ENCODE measurements at regions of chr20 and their contacts with region 1.

Region 1: DNA sequence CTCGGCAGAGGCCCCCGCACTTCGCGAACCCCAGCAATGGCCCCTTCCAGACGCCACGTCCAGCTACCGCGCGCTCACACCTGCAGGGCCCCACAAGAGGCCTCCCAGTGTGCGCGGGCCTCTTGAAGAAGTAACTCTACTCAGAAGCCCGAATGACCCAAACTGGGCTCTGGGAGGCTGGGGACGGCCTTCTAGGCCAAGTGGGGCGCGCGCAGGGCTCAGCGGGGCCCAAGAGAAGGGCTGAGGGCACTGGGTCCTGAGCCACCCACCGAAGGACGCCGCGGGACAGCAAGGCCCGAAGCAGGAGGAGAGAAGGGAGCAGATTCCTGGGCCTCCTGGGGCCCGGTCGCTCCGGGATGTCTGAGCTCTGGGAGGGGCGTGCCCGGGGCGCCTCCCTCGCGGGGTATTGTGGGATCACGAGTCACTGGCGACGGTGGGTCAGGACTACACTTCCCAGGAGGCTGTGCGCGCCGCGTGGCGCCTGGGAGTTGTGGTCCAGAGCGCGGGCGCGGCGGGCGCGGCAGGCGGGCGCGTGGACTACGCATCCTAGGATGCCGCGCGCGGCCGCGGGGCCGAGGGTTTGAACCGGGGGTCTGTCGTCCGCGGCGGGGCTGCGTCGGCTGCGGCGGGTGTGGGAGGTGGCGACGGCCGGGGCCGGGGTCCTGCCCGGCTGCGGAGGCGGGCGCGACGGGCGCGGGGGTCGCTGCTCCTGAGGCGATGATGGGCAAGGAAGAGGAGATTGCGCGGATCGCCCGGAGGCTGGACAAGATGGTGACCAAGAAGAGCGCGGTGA is at the start of gene TCEA2:
- DNase-seq: peak; percentile 97
- H3K4me3 Mint-ChIP-seq: peak within 1 kb of the TSS; percentile 85
- H3K27ac Mint-ChIP-seq: peak within 1 kb of the TSS; percentile 69
- H3K4me1 Mint-ChIP-seq: peaks cover 44% of the 10 kb centered on the region
- H3K27me3 Mint-ChIP-seq: no peaks in the 10 kb centered on the region
- total RNA-seq, gene TCEA2: 27.3 to 29.9 TPM

Region 2: GRCh38 chr20:63894358-63895201 is 168.2 kb before region 1 on chr20 and contains the start of gene DNAJC5:
- CTCF ChIA-PET with region 1: no interaction called
- POLR2A ChIA-PET with region 1: no interaction called
- intact Hi-C with region 1: loop called (anchors 10 kb)
- DNase-seq: peak; percentile 97
- H3K4me3 Mint-ChIP-seq: peak within 1 kb of the TSS; percentile 97
- H3K27ac Mint-ChIP-seq: peak within 1 kb of the TSS; percentile 97
- H3K4me1 Mint-ChIP-seq: peaks cover 37% of the 10 kb centered on the region
- H3K27me3 Mint-ChIP-seq: no peaks in the 10 kb centered on the region
- total RNA-seq, gene DNAJC5: 33.7 to 33.8 TPM

Region 3: GRCh38 chr20:63980806-63981728 is 81.7 kb before region 1 on chr20 and contains the start of gene PRPF6:
- CTCF ChIA-PET with region 1: interaction called, 28 read pairs
- POLR2A ChIA-PET with region 1: interaction called, 5 read pairs
- intact Hi-C with region 1: loop called (anchors 1 kb)
- DNase-seq: peak; percentile 97
- H3K4me3 Mint-ChIP-seq: peak within 1 kb of the TSS; percentile 84
- H3K27ac Mint-ChIP-seq: peak within 1 kb of the TSS; percentile 96
- H3K4me1 Mint-ChIP-seq: peaks cover 60% of the 10 kb centered on the region
- H3K27me3 Mint-ChIP-seq: no peaks in the 10 kb centered on the region
- total RNA-seq, gene PRPF6: 62.3 to 63.1 TPM

Region 4: DNA sequence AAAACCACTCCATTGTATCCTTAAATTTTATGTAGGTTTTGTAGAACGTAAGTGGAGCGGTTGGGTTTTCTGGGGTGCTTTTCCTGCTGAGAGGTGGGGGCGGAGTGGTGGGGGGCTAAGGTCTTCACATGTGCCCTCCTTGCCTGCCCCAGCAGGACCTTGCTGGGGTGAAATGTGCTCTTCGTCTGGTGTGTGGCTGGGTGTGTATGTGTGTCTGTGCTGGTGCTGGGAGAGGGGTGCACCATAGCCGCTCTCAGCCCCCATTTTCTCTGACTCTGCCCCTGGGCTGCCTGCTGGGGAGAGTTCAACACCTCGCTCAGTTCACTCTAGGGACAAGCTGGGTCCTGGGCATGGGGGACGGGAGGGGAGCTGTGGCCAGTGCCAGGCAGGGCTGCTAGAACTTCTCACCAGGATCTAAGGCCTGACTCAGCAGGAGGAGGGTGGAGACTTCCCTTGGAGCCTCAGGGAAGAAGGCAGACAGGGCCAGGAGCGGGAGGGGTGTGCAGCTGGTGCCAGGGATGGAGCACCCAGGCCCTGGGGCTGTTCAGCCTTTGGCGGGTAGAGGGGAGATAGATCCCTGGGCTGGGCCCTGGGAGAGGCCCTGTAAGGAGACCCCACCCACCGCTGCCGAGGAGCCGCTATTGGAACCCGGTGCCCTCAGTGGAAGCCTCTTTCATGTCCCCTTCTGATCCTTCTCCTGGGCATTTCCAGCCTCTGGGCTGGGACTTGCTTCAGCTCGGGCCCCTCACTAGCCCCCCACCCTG is 18.1 kb before region 1 on chr20:
- CTCF ChIA-PET with region 1: interaction called, 38 read pairs
- POLR2A ChIA-PET with region 1: interaction called, 5 read pairs
- intact Hi-C with region 1: loop called (anchors 1 kb)
- DNase-seq: no peak
- H3K4me3 Mint-ChIP-seq: no peak overlapping the region
- H3K27ac Mint-ChIP-seq: no peak overlapping the region
- H3K4me1 Mint-ChIP-seq: peaks cover 5% of the 10 kb centered on the region
- H3K27me3 Mint-ChIP-seq: peaks cover 20% of the 10 kb centered on the region

Region 5: DNA sequence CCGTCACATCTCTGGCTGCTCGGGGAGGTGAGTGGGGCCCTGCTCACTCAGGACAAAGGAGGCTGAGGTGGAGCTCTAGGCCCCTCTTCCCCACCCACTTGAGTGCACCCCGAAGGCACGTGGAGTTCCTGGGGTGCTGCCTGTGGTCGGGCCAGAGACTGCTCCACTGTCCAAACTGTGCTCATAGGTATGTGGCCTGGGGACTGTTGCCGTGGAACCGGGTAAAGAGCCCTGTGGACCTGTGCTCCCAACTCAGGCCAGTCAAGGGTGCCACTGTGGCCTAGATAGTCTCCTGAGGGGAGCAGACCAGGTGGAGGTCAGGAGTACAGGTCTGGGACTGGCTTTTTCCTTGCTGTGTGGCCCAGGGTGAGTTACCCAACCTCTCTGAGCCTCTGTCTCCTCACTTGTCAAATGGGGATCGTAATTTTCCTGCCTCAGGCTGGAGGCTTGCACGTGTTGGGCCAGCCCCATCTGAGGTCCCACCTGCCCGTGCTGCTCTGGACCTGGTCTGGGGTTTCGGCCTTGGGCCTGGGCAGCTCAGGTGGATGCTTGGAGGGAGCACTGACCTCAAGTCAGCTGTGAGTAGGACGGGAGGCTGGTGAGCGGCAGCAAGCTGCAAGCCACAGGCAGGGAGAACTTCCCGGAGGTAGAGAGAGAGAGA is 57.0 kb after region 1 on chr20:
- CTCF ChIA-PET with region 1: interaction called, 4 read pairs
- POLR2A ChIA-PET with region 1: no interaction called
- intact Hi-C with region 1: loop called (anchors 10 kb)
- DNase-seq: no peak
- H3K4me3 Mint-ChIP-seq: peak overlapping the region; percentile 35
- H3K27ac Mint-ChIP-seq: no peak overlapping the region
- H3K4me1 Mint-ChIP-seq: peaks cover 8% of the 10 kb centered on the region
- H3K27me3 Mint-ChIP-seq: peaks cover 8% of the 10 kb centered on the region

Measured in activated CD4-positive, alpha-beta memory T cell treated with anti-CD3 and anti-CD28 coated beads for 36 hours (primary cell).